ENCODE measurements at regions of chr15 and their contacts with region 1.

Region 1: DNA sequence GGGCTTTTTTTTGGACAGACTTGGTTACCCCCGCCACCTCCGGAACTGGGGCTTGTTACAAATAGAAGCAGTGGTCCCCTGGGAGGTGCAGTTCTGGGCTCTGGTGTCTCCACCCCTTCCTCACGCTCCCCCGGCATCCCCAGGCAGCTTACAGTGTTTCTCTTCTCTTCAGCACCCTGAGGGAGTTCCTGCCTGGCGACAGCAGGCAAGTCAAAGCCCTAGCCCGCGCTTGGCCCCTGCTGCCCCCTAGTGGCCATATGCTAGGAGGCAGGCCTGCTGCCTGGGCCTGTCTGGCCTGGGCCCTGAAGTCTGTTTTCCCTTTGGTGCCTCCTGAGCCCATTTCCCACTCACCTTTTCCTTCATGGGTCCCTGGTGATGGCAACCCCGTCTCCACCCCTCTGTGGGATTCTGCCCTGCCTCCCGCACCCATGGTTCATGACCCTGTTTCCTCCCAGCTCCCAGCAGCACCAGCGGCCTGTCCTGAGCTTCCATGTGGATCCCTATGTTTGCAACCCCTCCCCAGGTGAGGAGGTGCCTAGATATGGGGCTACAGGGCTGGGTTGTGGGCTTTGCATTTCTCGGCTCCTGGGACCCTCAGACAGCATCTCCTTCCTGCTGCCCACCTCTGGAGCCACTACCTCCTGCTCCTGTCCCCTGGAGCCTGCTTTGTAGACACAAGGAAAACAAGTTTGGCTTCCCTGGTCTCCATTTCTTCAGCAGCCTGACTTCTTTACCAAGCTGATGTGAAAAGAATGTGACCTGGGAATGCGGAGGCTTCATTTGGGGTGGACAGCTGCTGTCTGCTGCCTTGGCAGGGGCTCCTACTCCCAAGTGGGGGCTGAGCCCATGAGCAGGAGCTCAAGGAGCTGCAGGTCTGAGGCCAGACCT is 2.2 kb downstream of the SNX22 start:
- DNase-seq: peak; percentile 94
- ATAC-seq: peak; percentile 80

Region 2: GRCh38 chr15:64095795-64096667 is 57.7 kb before region 1 on chr15 and contains the start of gene SNX1:
- intact Hi-C with region 1: loop called (anchors 5 kb)
- DNase-seq: peak; percentile 96
- ATAC-seq: peak; percentile 81
- total RNA-seq, gene SNX1: 89.7 TPM

Region 3: DNA sequence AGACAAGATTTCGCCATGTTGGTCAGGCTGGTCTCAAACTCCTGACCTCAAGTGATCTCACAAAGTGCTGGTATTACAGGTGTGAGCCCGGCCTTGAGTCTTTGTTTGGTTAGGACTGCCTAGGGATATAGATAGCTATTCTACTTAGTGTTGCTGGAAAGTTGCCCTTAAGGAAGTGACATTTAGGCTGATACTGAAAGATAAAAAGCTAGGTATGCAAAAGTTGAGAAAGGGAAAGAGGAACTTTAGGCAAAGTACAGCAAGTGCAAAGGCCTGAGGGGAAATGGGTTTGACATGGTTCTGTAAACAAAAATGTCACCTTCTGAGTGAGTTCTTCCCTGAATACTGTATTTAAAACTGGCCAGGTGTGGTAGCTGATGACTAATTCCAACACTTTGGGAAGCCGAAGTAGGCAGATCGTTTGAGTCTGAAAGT is 418.1 kb after region 1 on chr15:
- intact Hi-C with region 1: no loop called
- DNase-seq: no peak
- ATAC-seq: no peak

Measured in left ventricle myocardium superior (tissue), 1 donor.